ENCODE measurements at regions of chr3 and their contacts with region 1.

Region 1: DNA sequence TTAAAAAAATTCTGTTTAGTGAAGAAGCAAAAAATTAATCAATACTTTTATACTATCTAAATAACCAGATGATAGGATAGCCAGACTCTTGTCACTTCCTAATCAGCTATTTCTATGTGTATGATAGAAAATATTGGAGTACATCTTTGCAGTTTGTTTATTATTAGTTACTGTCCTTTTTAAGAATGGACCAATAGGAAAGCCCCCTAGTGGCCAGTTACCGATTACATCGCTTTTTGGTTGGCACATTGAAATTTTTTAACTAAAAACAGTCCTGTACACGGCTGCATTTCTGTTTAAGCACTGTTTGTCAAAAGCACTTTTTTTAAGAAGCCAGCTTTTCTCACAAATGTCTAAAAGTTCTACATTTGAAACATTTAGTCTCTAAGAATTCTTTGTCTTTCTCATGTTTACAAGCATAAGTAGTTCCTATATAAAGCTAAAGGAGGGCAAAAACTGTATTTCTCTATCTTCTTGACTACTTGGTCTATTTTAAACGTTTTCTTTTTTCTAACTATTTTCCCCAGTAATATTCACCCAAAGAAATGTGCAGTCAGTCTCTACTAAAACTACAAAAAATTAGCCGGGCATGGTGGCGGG is 253.2 kb upstream of the LRTM1 start:
- DNase-seq: peak; percentile 63
- H3K4me3 Mint-ChIP-seq: no peak overlapping the region
- H3K27ac Mint-ChIP-seq: no peak overlapping the region
- H3K4me1 Mint-ChIP-seq: no peaks in the 10 kb centered on the region
- H3K27me3 Mint-ChIP-seq: no peaks in the 10 kb centered on the region

Region 2: DNA sequence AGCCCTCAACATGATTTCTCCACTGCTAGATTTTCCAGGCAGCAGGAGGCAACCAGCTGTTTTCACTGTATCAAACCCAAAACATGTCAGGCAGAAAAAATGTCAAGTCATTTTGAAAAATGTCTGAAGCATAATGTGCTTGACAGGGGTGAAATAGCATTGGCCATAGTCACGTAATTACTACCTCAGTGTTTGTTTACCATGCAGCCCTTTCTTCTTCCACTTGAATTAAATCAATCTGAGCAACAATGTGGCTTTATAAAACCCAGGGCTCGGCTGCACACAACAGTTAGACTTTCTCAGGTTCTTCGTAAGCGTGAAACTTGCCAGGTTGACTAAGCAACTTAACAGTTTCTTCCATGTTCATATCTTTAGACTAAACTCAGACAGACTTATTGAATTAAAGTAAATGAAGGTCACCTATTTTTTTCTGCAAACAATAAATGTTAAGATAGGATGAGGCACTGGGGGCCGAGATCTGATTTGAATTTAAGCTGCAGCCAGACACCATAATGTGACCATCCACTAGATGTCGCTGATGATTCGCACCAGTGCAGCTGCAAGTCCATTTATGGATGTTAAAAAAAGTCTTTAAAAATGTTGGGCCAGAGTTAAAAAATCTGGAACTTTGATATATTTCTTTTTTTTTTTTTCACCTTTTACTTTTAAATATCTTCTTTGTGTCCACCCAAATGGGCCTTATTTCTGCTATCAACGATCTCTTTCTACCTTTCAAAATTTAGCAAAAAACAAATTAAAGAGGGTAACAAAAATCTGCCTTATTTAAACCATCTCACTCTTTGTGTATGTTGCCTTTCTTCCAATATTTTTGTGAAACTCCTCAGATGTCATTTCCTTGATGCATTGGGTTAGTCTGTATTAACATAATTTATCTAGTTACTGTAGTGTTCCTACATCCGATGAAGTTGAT is 752.8 kb before region 1 on chr3:
- intact Hi-C with region 1: loop called (anchors 5 kb)
- DNase-seq: peak; percentile 80
- H3K4me3 Mint-ChIP-seq: no peak overlapping the region
- H3K27ac Mint-ChIP-seq: no peak overlapping the region
- H3K4me1 Mint-ChIP-seq: no peaks in the 10 kb centered on the region
- H3K27me3 Mint-ChIP-seq: no peaks in the 10 kb centered on the region

Region 3: DNA sequence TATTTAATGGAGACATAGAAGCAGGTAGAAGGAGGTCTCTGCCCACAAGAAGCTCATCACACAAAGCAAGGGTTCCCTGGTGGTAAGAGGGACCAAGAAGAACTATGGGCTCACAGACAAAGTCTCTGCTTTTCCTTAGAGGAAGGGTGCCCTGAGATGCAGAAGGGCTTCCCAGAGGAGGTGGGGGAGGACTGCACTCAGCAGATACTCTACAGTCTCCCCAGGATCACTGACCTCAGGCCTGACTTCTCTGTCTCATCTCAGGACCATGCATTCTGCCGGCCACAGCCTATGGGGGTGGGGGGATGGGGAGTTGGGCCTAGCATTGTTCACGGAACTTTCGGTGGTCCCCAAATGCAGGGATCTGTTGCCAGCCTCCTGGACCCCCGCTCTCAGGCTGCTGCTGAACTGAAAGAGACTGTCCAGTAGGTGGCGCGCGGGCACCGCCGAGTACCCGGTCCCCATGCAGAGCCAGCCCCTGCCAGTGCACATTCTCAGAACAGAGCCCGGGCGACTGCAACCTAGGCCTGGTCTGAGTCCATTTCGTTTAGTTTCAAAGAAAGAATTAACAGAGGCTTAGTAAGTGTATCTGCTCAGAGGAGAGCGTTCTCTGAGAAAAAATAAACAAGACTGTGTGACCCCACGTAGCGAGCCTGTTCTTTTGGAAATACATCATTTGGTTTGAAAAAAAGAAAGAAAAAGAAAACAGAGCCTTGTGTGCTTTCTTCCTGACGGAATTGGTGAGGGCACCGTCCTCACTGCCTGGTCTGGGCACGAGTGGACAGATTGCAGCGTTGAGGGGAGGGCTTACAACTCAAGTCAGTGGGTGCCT is 327.2 kb before region 1 on chr3:
- intact Hi-C with region 1: loop called (anchors 10 kb)
- DNase-seq: peak; percentile 81
- H3K4me3 Mint-ChIP-seq: no peak overlapping the region
- H3K27ac Mint-ChIP-seq: no peak overlapping the region
- H3K4me1 Mint-ChIP-seq: no peaks in the 10 kb centered on the region
- H3K27me3 Mint-ChIP-seq: no peaks in the 10 kb centered on the region

Region 4: GRCh38 chr3:55218577-55218976 is 37.5 kb after region 1 on chr3:
- intact Hi-C with region 1: no loop called
- DNase-seq: no peak
- H3K4me3 Mint-ChIP-seq: no peak overlapping the region
- H3K27ac Mint-ChIP-seq: no peak overlapping the region
- H3K4me1 Mint-ChIP-seq: no peaks in the 10 kb centered on the region
- H3K27me3 Mint-ChIP-seq: no peaks in the 10 kb centered on the region

Measured in activated CD4-positive, alpha-beta T cell treated with anti-CD3 and anti-CD28 coated beads, Interleukin-2, amount 10 ng/mL, durations not matched to agents 24 days and 14 days (primary cell).